ENCODE measurements at regions of chr7 and their contacts with region 1.

Region 1: GRCh38 chr7:98168181-98168905 is 42.9 kb upstream of the BHLHA15 start:
- DNase-seq: peak in 1 of 2 donors; percentile 56
- H3K4me3 ChIP-seq: no peak overlapping the region
- CTCF ChIP-seq: peak in 1 of 3 donors; percentile 54
- POLR2A ChIP-seq: no peak

Region 2: GRCh38 chr7:98021588-98022351 is 146.6 kb before region 1 on chr7:
- intact Hi-C with region 1: loop called (anchors 2 kb)
- DNase-seq: peak; percentile 66 to 95
- H3K4me3 ChIP-seq: no peak overlapping the region
- CTCF ChIP-seq: peak in 1 of 3 donors; percentile 82
- POLR2A ChIP-seq: no peak

Region 3: DNA sequence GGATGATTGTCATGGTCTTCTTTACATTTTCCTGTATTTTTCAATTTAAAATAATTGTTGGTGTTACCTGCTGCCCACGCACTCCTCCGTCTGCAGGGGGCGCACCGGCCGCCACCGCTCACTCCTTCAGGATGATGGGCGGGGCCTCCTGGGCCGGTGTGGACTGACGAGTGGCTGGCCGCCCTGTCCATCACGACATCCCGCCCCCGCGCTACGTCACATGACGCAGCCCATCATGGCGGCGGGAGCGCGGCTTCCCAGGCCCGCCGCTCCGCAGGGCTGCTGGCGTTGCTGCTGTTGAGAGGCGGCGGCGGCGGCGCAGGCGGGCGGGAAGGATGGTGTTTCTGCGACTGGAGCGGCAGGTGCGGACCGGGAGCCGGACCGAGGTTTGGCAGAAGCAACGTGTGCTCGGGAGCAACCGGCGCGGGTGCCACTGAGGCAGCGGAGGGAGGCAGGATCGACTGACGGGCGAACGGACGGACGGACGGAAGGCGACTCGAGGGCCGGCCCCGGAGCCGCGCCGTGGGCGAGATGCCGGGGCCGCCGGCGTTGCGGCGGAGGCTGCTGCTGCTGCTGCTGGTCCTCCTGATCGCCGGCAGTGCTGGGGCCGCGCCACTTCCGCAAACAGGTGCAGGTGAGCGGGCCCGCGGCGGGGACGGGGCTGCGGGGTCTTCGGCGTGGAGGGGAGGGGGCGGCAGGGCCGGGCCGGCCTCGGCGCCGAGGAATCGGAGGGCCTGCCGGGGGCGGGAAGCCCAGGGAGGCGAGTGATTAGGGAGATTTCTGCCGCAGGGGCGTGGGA is 61.5 kb before region 1 on chr7 and contains the start of gene LMTK2:
- intact Hi-C with region 1: loop called (anchors 10 kb)
- DNase-seq: peak; percentile 95 to 99
- H3K4me3 ChIP-seq: peak within 1 kb of the TSS; percentile 99
- CTCF ChIP-seq: peak in 1 of 3 donors; percentile 94
- POLR2A ChIP-seq: peak in 1 of 2 donors; percentile 3
- total RNA-seq, gene LMTK2: 31.9 to 44.3 (median 35.0) TPM